ENCODE measurements at regions of chr4 and their contacts with region 1.

Region 1: GRCh38 chr4:21790438-21791029 is 158.0 kb downstream of the KCNIP4 start:
- DNase-seq: peak; percentile 54
- H3K4me3 Mint-ChIP-seq: no peak overlapping the region
- H3K27ac Mint-ChIP-seq: no peak overlapping the region
- H3K4me1 Mint-ChIP-seq: peaks cover 6% of the 10 kb centered on the region
- H3K27me3 Mint-ChIP-seq: no peaks in the 10 kb centered on the region
- CTCF ChIP-seq: peak; percentile 43

Region 2: DNA sequence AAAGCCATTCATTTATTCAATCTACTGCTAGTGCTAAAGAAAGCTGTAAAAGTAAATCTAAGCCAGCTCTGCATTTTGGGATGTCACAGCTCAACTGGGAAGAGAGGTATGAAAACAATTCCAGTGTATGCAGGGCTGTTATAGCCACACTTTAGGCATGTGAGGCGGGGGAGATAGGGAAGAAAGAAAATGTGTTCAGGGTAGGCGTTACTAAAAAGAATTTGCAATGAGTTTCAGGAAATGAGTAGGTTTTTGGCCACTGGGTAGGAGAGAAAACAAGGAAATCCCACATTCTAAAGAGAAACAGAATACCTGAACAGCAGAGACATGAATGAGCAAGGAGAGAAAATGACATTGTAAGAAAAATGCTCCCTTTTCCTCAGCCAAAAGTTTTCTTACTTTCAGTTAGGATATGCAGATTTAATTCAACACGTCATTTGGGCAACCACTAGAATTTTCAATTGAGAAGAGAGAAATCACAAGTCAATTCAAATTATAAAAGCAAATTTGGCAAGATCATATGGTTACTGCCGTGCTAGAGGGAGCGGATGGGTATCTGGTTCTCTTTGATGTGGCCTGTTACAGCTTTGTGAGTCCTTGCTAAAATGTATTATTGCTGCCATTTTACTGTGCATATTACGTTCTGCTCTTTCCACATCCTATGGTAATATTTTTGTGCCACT is 68.2 kb before region 1 on chr4:
- CTCF ChIA-PET with region 1: no interaction called
- POLR2A ChIA-PET with region 1: no interaction called
- intact Hi-C with region 1: no loop called
- DNase-seq: no peak
- H3K4me3 Mint-ChIP-seq: no peak overlapping the region
- H3K27ac Mint-ChIP-seq: no peak overlapping the region
- H3K4me1 Mint-ChIP-seq: peaks cover 6% of the 10 kb centered on the region
- H3K27me3 Mint-ChIP-seq: no peaks in the 10 kb centered on the region
- CTCF ChIP-seq: no peak

Region 3: DNA sequence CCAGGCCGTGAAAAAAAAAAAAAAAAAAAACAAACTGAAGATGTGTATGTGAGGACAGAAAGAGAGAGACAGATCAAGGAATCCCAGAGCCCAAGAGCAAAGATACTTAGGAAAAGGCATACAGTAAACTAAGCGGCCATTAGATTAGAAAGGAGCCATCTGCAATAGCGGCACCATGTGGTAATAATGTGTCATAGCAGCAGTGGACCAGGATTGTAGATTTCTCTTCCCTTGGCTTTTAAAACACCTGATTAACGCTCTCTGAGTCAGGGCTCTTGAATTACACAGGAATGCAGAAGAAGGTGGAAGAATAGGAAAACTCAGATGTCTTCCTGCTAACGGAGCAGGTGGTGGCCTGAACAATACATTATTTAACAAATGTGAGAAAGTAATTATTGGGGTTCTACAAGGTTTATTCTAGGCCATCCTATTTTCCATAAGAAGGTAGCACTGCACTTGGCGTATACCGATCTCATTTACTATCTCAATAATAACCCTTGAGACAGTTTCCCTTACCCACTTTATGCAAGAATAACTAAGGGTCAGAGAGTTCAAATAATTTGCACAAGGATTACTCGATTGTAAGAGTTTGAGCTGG is 24.6 kb before region 1 on chr4:
- CTCF ChIA-PET with region 1: interaction called, 28 read pairs
- POLR2A ChIA-PET with region 1: no interaction called
- intact Hi-C with region 1: no loop called
- DNase-seq: peak; percentile 73
- H3K4me3 Mint-ChIP-seq: no peak overlapping the region
- H3K27ac Mint-ChIP-seq: no peak overlapping the region
- H3K4me1 Mint-ChIP-seq: peaks cover 6% of the 10 kb centered on the region
- H3K27me3 Mint-ChIP-seq: peaks cover 13% of the 10 kb centered on the region
- CTCF ChIP-seq: peak; percentile 76

Region 4: DNA sequence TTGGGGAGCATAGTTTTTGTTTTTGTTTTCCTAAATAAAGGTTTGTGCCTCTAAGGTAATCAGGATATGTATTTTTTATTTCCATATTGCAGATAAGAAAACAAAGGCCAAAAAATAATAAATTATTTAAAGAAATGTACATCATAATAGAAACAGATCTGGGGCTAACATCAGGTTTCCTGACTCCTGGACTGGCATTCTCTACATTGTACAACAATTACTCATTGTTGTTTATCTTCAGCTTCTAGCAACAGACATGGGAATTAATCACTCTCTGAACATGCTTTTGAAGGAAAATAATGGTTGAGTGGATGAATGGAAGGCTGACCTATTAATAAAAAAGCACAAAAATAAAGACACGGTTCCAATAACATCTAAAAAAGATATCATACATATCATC is 11.9 kb after region 1 on chr4:
- CTCF ChIA-PET with region 1: interaction called, 36 read pairs
- POLR2A ChIA-PET with region 1: no interaction called
- intact Hi-C with region 1: no loop called
- DNase-seq: peak; percentile 29
- H3K4me3 Mint-ChIP-seq: no peak overlapping the region
- H3K27ac Mint-ChIP-seq: peak overlapping the region; percentile 73
- H3K4me1 Mint-ChIP-seq: peaks cover 23% of the 10 kb centered on the region
- H3K27me3 Mint-ChIP-seq: no peaks in the 10 kb centered on the region
- CTCF ChIP-seq: no peak

Region 5: GRCh38 chr4:22129454-22130029 is 339.0 kb after region 1 on chr4:
- CTCF ChIA-PET with region 1: interaction called, 10 read pairs
- POLR2A ChIA-PET with region 1: no interaction called
- intact Hi-C with region 1: loop called (anchors 1 kb)
- DNase-seq: peak; percentile 66
- H3K4me3 Mint-ChIP-seq: no peak overlapping the region
- H3K27ac Mint-ChIP-seq: no peak overlapping the region
- H3K4me1 Mint-ChIP-seq: no peaks in the 10 kb centered on the region
- H3K27me3 Mint-ChIP-seq: no peaks in the 10 kb centered on the region
- CTCF ChIP-seq: peak; percentile 54

Region 6: GRCh38 chr4:22369901-22370562 is 579.5 kb after region 1 on chr4:
- CTCF ChIA-PET with region 1: interaction called, 16 read pairs
- POLR2A ChIA-PET with region 1: no interaction called
- intact Hi-C with region 1: no loop called
- DNase-seq: no peak
- H3K4me3 Mint-ChIP-seq: no peak overlapping the region
- H3K27ac Mint-ChIP-seq: no peak overlapping the region
- H3K4me1 Mint-ChIP-seq: no peaks in the 10 kb centered on the region
- H3K27me3 Mint-ChIP-seq: no peaks in the 10 kb centered on the region
- CTCF ChIP-seq: no peak

Region 7: DNA sequence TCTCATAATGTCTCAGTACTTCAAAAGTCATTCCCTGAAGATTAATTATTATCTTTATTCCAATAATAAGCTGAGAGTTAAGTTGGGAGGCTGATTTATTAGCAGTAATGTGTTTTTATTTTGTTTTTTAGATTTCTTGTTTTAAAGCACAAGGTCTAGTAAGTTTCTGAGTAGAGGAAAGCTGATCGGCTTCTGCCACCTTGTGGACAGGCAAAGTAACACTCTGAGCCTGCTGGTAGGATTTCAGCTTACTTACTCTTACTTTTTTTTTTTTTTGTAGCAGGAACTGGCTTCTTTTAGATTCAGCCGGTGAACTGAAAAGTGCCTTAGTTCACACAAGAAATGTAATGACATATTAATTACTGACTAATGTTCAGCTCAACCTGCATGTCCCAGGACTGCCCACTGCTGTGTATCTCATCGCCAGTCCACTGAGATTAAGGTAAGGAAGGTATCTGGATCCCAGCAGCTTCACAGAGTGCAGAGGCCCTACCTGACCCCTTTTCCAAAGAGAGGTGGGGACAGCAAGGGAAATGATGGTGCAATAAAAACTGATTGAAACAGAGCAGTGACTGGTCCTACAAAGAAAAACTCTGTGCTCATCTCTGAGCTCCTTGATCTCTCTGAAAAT is 598.8 kb after region 1 on chr4:
- CTCF ChIA-PET with region 1: interaction called, 332 read pairs
- POLR2A ChIA-PET with region 1: interaction called, 9 read pairs
- intact Hi-C with region 1: loop called (anchors 1 kb)
- DNase-seq: peak; percentile 68
- H3K4me3 Mint-ChIP-seq: no peak overlapping the region
- H3K27ac Mint-ChIP-seq: no peak overlapping the region
- H3K4me1 Mint-ChIP-seq: peaks cover 6% of the 10 kb centered on the region
- H3K27me3 Mint-ChIP-seq: no peaks in the 10 kb centered on the region
- CTCF ChIP-seq: peak; percentile 71

Region 8: DNA sequence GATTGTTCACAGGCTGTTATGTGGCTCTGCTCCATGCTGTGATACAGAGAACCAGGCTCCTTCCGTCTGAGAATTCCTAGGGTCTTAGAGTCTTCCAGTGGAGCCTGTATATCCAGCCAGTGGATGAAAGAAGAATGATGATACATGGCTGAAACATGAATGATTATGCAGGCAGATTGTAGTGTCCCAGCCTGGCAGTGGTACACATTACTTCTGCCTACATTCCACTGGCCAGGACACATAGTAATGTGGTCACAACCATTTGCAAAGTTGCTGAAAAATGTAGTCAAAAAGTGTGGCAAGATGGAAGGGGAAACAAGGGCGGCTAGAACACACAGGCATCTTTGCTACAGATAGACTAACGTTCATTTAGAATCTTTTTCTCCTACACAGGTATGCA is 897.7 kb after region 1 on chr4:
- CTCF ChIA-PET with region 1: interaction called, 3 read pairs
- POLR2A ChIA-PET with region 1: no interaction called
- intact Hi-C with region 1: loop called (anchors 1 kb)
- DNase-seq: no peak
- H3K4me3 Mint-ChIP-seq: no peak overlapping the region
- H3K27ac Mint-ChIP-seq: peak overlapping the region; percentile 39
- H3K4me1 Mint-ChIP-seq: peaks cover 14% of the 10 kb centered on the region
- H3K27me3 Mint-ChIP-seq: no peaks in the 10 kb centered on the region
- CTCF ChIP-seq: no peak

Measured in MCF 10A (cell line).